Activated CD4-positive, alpha-beta memory T cell treated with anti-CD3 and anti-CD28 coated beads for 36 hours (primary cell): ENCODE measurements at regions of chr9 and their contacts with region 1.

Region 1: GRCh38 chr9:97710356-97711222 is 13.4 kb upstream of the XPA start:
- DNase-seq: peak; percentile 55
- H3K4me3 Mint-ChIP-seq: no peak overlapping the region
- H3K27ac Mint-ChIP-seq: no peak overlapping the region
- H3K4me1 Mint-ChIP-seq: peaks cover 22% of the 10 kb centered on the region
- H3K27me3 Mint-ChIP-seq: peaks cover 8% of the 10 kb centered on the region

Region 2: DNA sequence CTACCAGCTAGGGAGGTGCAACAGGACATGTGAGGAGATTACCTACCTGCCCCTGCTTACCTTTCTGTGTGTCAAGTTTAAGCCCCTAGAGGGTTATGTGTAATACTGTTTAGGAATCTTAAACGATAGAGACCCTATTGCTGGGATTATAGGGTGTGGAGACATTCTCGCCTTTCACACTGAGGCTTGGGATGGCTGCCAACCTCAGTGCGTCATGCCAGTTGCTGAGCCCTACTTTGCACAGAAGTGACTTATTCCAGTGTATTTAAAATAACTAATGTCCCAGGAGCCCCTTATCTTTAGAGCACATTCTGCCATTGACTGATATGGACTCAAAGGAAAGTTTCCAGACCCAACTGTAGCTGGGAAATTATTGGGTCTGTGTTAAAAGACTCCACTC is 63.1 kb after region 1 on chr9:
- CTCF ChIA-PET with region 1: no interaction called
- POLR2A ChIA-PET with region 1: no interaction called
- intact Hi-C with region 1: no loop called
- DNase-seq: no peak
- H3K4me3 Mint-ChIP-seq: no peak overlapping the region
- H3K27ac Mint-ChIP-seq: no peak overlapping the region
- H3K4me1 Mint-ChIP-seq: no peaks in the 10 kb centered on the region
- H3K27me3 Mint-ChIP-seq: peaks cover 17% of the 10 kb centered on the region

Region 3: GRCh38 chr9:97803167-97804058 is 92.8 kb after region 1 on chr9:
- CTCF ChIA-PET with region 1: no interaction called
- POLR2A ChIA-PET with region 1: no interaction called
- intact Hi-C with region 1: loop called (anchors 5 kb)
- DNase-seq: peak; percentile 75
- H3K4me3 Mint-ChIP-seq: peak overlapping the region; percentile 70
- H3K27ac Mint-ChIP-seq: no peak overlapping the region
- H3K4me1 Mint-ChIP-seq: peaks cover 3% of the 10 kb centered on the region
- H3K27me3 Mint-ChIP-seq: peaks cover 15% of the 10 kb centered on the region

Region 4: GRCh38 chr9:97853844-97854695 is 143.5 kb after region 1 on chr9:
- CTCF ChIA-PET with region 1: no interaction called
- POLR2A ChIA-PET with region 1: no interaction called
- intact Hi-C with region 1: loop called (anchors 2 kb)
- DNase-seq: peak; percentile 76
- H3K4me3 Mint-ChIP-seq: peak overlapping the region; percentile 87
- H3K27ac Mint-ChIP-seq: no peak overlapping the region
- H3K4me1 Mint-ChIP-seq: peaks cover 24% of the 10 kb centered on the region
- H3K27me3 Mint-ChIP-seq: peaks cover 74% of the 10 kb centered on the region

Region 5: DNA sequence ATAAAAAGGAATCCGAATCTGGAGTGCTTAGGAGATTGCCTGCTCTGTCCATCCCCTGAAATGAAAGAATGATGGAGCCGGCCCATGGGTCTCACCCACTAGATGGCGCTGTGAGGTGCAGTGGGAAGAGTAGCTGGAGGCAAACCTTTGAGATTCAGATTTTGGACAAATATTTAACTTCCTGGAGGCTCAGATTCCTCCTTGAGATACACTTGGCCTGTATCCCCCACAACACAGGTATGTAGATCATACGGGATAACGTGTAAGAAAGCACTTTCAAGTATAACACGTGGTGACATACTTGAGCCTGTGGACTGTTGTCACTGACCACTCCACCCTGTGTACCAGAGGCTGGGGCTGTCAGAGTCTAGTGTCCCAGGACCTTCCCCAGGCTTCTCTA is 179.4 kb after region 1 on chr9:
- CTCF ChIA-PET with region 1: interaction called, 10 read pairs
- POLR2A ChIA-PET with region 1: interaction called, 3 read pairs
- intact Hi-C with region 1: no loop called
- DNase-seq: peak; percentile 82
- H3K4me3 Mint-ChIP-seq: no peak overlapping the region
- H3K27ac Mint-ChIP-seq: no peak overlapping the region
- H3K4me1 Mint-ChIP-seq: peaks cover 7% of the 10 kb centered on the region
- H3K27me3 Mint-ChIP-seq: no peaks in the 10 kb centered on the region

Region 6: GRCh38 chr9:97900738-97901565 is 190.4 kb after region 1 on chr9:
- CTCF ChIA-PET with region 1: interaction called, 21 read pairs
- POLR2A ChIA-PET with region 1: no interaction called
- intact Hi-C with region 1: loop called (anchors 2 kb)
- DNase-seq: no peak
- H3K4me3 Mint-ChIP-seq: no peak overlapping the region
- H3K27ac Mint-ChIP-seq: no peak overlapping the region
- H3K4me1 Mint-ChIP-seq: peaks cover 55% of the 10 kb centered on the region
- H3K27me3 Mint-ChIP-seq: no peaks in the 10 kb centered on the region

Region 7: DNA sequence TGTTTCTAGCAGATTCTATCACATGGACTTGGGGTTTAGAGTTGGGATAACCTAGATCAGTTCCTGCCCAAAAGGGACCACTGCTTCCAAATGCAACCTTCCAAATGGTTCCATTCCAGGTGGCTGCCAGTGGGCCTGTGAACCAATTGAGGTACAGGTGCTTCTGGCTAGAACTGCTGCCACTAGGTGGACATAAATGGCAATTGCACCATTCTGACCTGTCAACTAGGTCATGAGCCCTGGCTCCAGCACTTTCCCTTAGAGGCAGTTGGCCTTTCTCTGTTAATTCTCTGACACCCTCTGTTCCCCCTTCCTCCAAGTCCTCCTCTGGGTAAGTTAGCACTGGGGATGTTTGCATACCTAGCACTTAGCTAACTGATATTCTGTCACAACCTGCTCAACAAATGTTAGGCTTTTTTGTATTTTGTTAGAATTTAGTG is 244.0 kb after region 1 on chr9:
- CTCF ChIA-PET with region 1: interaction called, 3 read pairs
- POLR2A ChIA-PET with region 1: no interaction called
- intact Hi-C with region 1: loop called (anchors 1 kb)
- DNase-seq: peak; percentile 66
- H3K4me3 Mint-ChIP-seq: no peak overlapping the region
- H3K27ac Mint-ChIP-seq: no peak overlapping the region
- H3K4me1 Mint-ChIP-seq: peaks cover 4% of the 10 kb centered on the region
- H3K27me3 Mint-ChIP-seq: no peaks in the 10 kb centered on the region

Region 8: GRCh38 chr9:98263482-98264357 is 553.1 kb after region 1 on chr9:
- CTCF ChIA-PET with region 1: no interaction called
- POLR2A ChIA-PET with region 1: no interaction called
- intact Hi-C with region 1: loop called (anchors 10 kb)
- DNase-seq: peak; percentile 90
- H3K4me3 Mint-ChIP-seq: no peak overlapping the region
- H3K27ac Mint-ChIP-seq: peak overlapping the region; percentile 39
- H3K4me1 Mint-ChIP-seq: no peaks in the 10 kb centered on the region
- H3K27me3 Mint-ChIP-seq: peaks cover 3% of the 10 kb centered on the region